ENCODE measurements at regions of chr10 and their contacts with region 1.

Region 1: DNA sequence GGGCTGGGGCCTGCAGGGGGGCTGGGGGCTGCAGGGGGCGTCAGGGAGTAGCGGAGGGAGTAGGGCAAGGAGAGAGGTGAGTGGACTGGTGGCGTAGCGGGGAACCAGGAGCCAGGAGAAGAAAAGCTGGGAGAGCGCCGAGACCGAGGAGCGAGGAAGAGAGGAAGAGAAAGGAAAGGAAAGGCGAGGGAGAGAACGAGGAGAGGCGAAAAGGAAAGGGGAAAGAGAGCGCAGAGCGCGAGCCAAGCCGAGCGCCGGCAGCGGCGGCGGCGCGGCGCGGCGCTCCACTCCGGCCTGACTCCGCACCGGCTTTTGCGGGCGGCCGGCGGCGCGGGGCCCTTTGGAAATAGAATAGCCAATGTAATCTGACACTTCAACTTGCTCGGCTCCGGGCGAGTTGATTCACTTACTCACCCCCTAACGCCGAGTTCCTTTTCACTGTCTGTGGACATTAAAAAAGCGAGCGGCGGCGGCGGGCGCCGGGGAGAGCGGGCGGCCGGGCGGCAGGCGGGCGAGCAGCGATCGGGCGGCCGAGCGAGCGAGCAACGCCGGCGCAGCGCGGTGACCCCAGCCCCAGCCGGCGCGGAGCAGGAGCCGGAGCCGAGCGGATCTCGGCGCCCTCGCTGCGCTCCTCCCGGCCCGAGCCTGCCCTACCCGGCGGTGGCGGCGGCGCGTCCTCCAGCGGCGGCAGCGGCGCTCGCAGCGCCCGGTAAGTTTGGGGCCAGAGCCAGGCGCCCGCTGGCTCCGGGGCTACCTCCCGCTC is at the start of gene ZMIZ1:
- DNase-seq: peak; percentile 83 to 87 (median 85)
- H3K4me3 ChIP-seq: peak within 1 kb of the TSS; percentile 61 to 85
- H3K4me3 Mint-ChIP-seq: peak within 1 kb of the TSS; percentile 94 to 99 (median 97)
- H3K27ac ChIP-seq: peak within 1 kb of the TSS; percentile 76
- H3K27ac Mint-ChIP-seq: peak within 1 kb of the TSS; percentile 90 to 97 (median 95)
- H3K4me1 ChIP-seq: peaks cover 50% of the 10 kb centered on the region
- H3K4me1 Mint-ChIP-seq: peaks cover 29 to 71% (median 44%) of the 10 kb centered on the region in 4 donors
- H3K27me3 ChIP-seq: no peaks in the 10 kb centered on the region
- H3K27me3 Mint-ChIP-seq: no peaks in the 10 kb centered on the region
- total RNA-seq, gene ZMIZ1: 23.1 to 25.4 TPM

Region 2: DNA sequence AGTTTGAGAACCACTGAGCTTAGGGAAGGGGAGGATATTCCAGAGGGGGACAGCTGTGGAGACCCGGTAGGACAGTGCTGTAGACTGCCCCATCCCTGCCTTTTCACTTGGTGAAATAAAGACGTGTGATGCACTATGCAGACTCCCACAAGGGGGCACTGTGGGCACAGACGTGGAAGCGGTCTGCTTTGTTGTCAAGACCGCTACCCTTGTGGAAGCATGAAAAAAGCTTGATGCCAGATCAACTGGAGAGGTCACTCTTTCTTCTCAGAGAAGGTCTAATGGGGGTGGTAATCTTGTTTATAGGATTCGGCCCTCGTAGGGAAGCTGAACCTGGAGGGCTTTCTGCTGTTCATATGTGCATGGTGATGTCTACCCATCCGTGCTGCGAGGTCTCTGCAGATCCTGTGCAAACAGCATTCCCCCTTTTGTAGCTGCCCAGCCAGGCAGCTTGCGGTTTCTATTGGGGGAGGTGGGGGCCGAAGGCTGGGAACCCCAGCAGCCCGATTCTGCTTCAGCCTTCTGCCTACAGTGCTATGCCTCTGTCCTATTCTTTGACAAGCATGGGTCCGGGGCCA is 1021.3 kb before region 1 on chr10:
- CTCF ChIA-PET with region 1: no interaction called
- POLR2A ChIA-PET with region 1: no interaction called
- intact Hi-C with region 1: loop called (anchors 5 kb)
- DNase-seq: peak; percentile 64 to 76 (median 73)
- H3K4me3 ChIP-seq: no peak overlapping the region
- H3K4me3 Mint-ChIP-seq: no peak overlapping the region
- H3K27ac ChIP-seq: no peak overlapping the region
- H3K27ac Mint-ChIP-seq: peak overlapping the region in 1 of 7 donors; percentile 62
- H3K4me1 ChIP-seq: peaks cover 7% of the 10 kb centered on the region
- H3K4me1 Mint-ChIP-seq: peaks cover 3 to 15% (median 11%) of the 10 kb centered on the region in 4 donors
- H3K27me3 ChIP-seq: no peaks in the 10 kb centered on the region
- H3K27me3 Mint-ChIP-seq: no peaks in the 10 kb centered on the region

Region 3: GRCh38 chr10:78852466-78853240 is 216.1 kb before region 1 on chr10:
- CTCF ChIA-PET with region 1: no interaction called
- POLR2A ChIA-PET with region 1: no interaction called
- intact Hi-C with region 1: loop called (anchors 2 kb)
- DNase-seq: peak in 4 of 5 donors; percentile 10 to 22 (median 16)
- H3K4me3 ChIP-seq: no peak overlapping the region
- H3K4me3 Mint-ChIP-seq: no peak overlapping the region
- H3K27ac ChIP-seq: no peak overlapping the region
- H3K27ac Mint-ChIP-seq: no peak overlapping the region
- H3K4me1 ChIP-seq: no peaks in the 10 kb centered on the region
- H3K4me1 Mint-ChIP-seq: no peaks in the 10 kb centered on the region
- H3K27me3 ChIP-seq: no peaks in the 10 kb centered on the region
- H3K27me3 Mint-ChIP-seq: no peaks in the 10 kb centered on the region

Region 4: GRCh38 chr10:78972947-78973900 is 95.5 kb before region 1 on chr10:
- CTCF ChIA-PET with region 1: interaction called, 8 read pairs
- POLR2A ChIA-PET with region 1: interaction called, 72 read pairs
- intact Hi-C with region 1: loop called (anchors 1 kb)
- DNase-seq: peak; percentile 53 to 82 (median 64)
- H3K4me3 ChIP-seq: peak overlapping the region in 1 of 2 donors; percentile 57
- H3K4me3 Mint-ChIP-seq: peak overlapping the region; percentile 78 to 90 (median 84)
- H3K27ac ChIP-seq: no peak overlapping the region
- H3K27ac Mint-ChIP-seq: peak overlapping the region in 6 of 7 donors; percentile 78 to 93 (median 80)
- H3K4me1 ChIP-seq: peaks cover 13% of the 10 kb centered on the region
- H3K4me1 Mint-ChIP-seq: peaks cover 9 to 35% (median 17%) of the 10 kb centered on the region in 4 donors
- H3K27me3 ChIP-seq: no peaks in the 10 kb centered on the region
- H3K27me3 Mint-ChIP-seq: no peaks in the 10 kb centered on the region

Region 5: DNA sequence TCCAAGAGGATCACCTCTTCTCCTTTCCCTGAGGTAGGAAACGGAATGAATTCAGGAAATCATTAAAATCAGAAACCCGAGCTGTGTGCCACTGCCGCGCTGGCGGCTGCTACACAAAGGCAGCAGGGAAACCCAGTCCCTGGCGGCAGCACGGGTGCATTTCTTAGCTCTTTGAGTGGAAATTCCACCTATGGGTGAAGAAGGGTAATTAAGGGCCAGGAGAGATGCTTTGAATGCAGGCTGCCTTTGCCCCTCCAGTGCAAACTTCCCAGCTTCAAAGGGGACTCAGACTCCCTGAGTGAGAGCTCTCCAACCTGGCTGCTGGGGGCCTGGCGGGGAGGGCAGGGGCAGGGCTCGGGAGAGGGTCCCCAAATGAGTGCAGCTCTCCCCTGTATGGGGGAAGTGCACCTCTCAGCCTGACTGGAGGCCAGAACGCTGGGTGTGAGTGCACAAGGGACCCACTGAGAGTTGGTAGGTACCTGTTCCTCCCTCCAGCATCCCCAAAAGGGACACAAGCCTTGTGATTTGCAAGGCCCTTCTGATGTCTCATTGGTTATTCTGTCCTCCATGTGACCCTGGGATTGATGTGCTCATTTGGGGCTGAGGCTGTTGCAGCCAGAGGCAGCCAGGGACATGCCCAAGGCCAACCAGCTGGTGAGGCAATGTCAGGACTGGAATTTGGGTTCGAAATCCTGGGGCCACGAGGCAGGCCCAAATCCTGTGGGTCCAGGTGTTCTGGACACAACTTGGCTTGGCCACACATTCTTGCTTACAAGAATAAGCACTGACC is 16.3 kb before region 1 on chr10:
- CTCF ChIA-PET with region 1: interaction called, 4 read pairs
- POLR2A ChIA-PET with region 1: interaction called, 140 read pairs
- intact Hi-C with region 1: loop called (anchors 1 kb)
- DNase-seq: peak in 3 of 5 donors; percentile 28 to 35 (median 34)
- H3K4me3 ChIP-seq: no peak overlapping the region
- H3K4me3 Mint-ChIP-seq: no peak overlapping the region
- H3K27ac ChIP-seq: no peak overlapping the region
- H3K27ac Mint-ChIP-seq: peak overlapping the region in 1 of 7 donors; percentile 59
- H3K4me1 ChIP-seq: peaks cover 46% of the 10 kb centered on the region
- H3K4me1 Mint-ChIP-seq: peaks cover 27 to 58% (median 37%) of the 10 kb centered on the region in 4 donors
- H3K27me3 ChIP-seq: no peaks in the 10 kb centered on the region
- H3K27me3 Mint-ChIP-seq: no peaks in the 10 kb centered on the region

Region 6: DNA sequence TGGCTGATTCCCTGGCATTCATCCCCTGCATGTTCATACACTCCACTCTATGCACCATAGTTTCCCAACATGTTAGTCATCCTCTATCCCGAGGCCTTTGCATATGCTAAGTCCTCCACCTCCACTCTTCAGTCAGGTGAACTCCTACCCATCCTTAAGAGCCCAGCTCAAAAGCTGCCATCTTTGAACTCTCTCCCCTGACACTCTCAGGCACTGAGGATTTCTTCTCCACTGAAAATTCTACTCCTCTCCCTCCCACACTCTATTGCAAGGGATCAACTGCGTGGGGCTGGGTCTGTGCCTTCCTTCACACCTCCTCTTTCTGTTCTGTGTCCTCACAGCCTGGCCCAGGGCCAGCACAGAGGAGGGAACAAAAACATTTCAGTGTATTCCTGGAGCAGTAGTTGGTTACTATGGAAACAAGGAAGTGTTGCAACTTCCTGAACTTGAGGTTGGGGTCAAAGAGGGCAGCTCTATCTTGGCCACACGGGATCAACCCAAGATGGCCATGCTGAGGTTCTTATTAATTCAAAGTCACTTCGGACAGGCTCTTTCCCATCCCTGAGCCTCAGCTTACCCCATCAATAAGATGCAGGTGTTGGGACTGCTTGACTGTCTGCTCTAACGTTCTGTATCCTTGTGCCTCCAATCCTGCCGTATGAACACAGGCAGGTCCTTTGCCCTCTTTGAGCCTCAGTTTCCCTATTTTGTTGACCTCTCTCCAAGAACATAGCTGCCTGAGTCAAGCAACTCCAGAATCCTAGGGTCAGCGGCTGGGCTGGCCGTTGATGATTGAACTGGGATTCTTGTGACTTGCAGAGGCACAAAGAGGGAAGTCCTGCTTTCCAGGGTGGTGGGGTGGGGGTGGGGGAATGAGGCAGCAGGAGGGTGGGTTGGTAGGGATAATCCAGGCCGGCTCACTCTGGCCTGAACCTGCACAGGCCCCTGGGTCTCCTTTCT is 15.5 kb after region 1 on chr10:
- CTCF ChIA-PET with region 1: no interaction called
- POLR2A ChIA-PET with region 1: no interaction called
- intact Hi-C with region 1: no loop called
- DNase-seq: peak in 1 of 5 donors; percentile 18
- H3K4me3 ChIP-seq: no peak overlapping the region
- H3K4me3 Mint-ChIP-seq: peak overlapping the region in 7 of 8 donors; percentile 1 to 70 (median 44)
- H3K27ac ChIP-seq: no peak overlapping the region
- H3K27ac Mint-ChIP-seq: peak overlapping the region; percentile 11 to 89 (median 76)
- H3K4me1 ChIP-seq: peaks cover 44% of the 10 kb centered on the region
- H3K4me1 Mint-ChIP-seq: peaks cover 34 to 80% (median 50%) of the 10 kb centered on the region in 4 donors
- H3K27me3 ChIP-seq: no peaks in the 10 kb centered on the region
- H3K27me3 Mint-ChIP-seq: no peaks in the 10 kb centered on the region

Region 7: DNA sequence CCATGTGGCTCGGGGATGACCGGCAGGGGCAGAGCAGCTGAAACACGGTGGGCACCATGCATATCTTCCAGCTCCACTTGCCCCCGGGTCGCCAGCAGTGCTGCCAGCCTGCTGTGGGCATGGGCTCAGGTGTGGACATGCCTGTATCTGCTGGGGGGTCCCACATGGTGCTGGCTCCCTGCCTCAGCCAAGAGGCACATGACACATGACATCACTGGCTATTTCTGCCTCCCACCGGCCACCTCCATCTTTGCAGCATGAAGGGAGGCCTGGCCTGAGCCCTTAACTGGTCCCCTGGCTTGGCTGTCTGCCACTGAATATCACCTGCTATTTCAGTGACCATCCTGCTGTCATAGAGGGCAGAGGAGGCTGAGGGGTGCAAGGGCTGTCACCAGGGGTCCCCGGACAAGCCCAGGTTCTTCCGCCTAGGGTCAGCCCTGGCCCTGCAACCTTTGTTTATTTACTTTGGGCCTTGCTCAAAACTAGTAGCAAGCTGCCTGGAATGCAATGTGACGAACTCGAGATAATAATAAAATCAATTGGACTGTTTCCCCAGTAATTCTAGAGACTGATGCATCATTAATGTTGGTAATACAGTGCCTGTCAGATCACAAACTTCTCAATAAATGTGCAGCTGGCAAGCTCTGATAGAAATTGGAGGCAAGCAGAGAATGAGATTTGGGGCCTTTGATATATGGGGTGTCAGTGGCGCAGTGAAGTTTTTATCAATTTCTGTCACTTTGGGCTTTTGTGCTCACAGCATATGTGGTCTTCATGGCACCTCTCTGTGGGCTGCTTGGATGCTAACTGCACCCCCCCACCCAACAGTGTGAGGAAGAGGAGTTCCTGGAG is 28.5 kb after region 1 on chr10:
- CTCF ChIA-PET with region 1: no interaction called
- POLR2A ChIA-PET with region 1: no interaction called
- intact Hi-C with region 1: no loop called
- DNase-seq: no peak
- H3K4me3 ChIP-seq: no peak overlapping the region
- H3K4me3 Mint-ChIP-seq: no peak overlapping the region
- H3K27ac ChIP-seq: no peak overlapping the region
- H3K27ac Mint-ChIP-seq: peak overlapping the region in 2 of 7 donors; percentile 54 to 70
- H3K4me1 ChIP-seq: peaks cover 36% of the 10 kb centered on the region
- H3K4me1 Mint-ChIP-seq: peaks cover 31 to 94% (median 54%) of the 10 kb centered on the region in 4 donors
- H3K27me3 ChIP-seq: no peaks in the 10 kb centered on the region
- H3K27me3 Mint-ChIP-seq: no peaks in the 10 kb centered on the region

Region 8: GRCh38 chr10:79266100-79266499 is 197.4 kb after region 1 on chr10:
- CTCF ChIA-PET with region 1: no interaction called
- POLR2A ChIA-PET with region 1: no interaction called
- intact Hi-C with region 1: no loop called
- DNase-seq: no peak
- H3K4me3 ChIP-seq: no peak overlapping the region
- H3K4me3 Mint-ChIP-seq: no peak overlapping the region
- H3K27ac ChIP-seq: no peak overlapping the region
- H3K27ac Mint-ChIP-seq: peak overlapping the region in 5 of 7 donors; percentile 15 to 70 (median 38)
- H3K4me1 ChIP-seq: peaks cover 19% of the 10 kb centered on the region
- H3K4me1 Mint-ChIP-seq: peaks cover 8 to 25% (median 14%) of the 10 kb centered on the region in 4 donors
- H3K27me3 ChIP-seq: no peaks in the 10 kb centered on the region
- H3K27me3 Mint-ChIP-seq: no peaks in the 10 kb centered on the region

Region 9: GRCh38 chr10:79322616-79323543 is 254.1 kb after region 1 on chr10:
- CTCF ChIA-PET with region 1: no interaction called
- POLR2A ChIA-PET with region 1: interaction called, 3 read pairs
- intact Hi-C with region 1: loop called (anchors 10 kb)
- DNase-seq: peak; percentile 85 to 94 (median 88)
- H3K4me3 ChIP-seq: peak overlapping the region; percentile 8 to 41
- H3K4me3 Mint-ChIP-seq: peak overlapping the region; percentile 41 to 91 (median 85)
- H3K27ac ChIP-seq: peak overlapping the region; percentile 37
- H3K27ac Mint-ChIP-seq: peak overlapping the region; percentile 92 to 98 (median 96)
- H3K4me1 ChIP-seq: peaks cover 88% of the 10 kb centered on the region
- H3K4me1 Mint-ChIP-seq: peaks cover 58 to 68% (median 65%) of the 10 kb centered on the region in 4 donors
- H3K27me3 ChIP-seq: no peaks in the 10 kb centered on the region
- H3K27me3 Mint-ChIP-seq: no peaks in the 10 kb centered on the region

Measured in CD4-positive, alpha-beta memory T cell (primary cell).